Transverse colon (tissue), 4 donors: ENCODE measurements at regions of chr17 and their contacts with region 1.

Region 1: DNA sequence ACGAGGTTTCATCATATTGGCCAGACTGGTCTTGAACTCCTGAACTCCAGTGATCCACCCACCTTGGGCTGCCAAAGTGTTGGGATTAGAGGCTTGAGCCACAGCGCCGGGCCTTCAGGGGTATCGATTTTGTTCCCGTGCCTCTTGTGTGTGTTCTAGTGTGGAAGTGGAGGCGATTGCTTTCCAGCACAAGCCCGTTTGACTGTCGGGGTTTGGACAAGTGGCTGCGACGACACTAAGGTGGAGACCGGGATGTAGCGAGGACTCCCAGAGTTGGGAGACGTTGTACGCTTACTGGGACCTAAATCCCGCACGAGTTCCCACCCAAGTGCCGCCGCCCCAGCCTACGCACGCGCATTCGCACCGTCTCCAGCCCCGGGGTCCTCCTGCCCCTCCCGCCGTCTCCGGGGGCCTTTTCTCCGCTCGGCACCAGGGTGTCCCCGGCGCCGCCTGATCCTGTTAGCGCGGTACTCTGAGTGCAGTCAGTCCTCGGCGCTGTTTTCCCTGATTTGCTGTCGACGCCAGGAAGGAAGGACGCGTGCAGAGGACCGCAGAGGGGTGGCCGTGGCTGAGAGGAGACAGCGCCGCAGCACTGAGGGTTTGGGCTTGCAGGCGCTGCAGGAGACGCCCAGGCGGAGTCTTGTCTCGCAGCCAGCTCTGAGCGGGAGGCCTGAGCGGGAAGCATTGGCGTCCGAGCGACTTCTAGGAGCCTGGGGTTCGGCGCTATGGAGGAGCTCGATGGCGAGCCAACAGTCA is at the start of gene NUP85:
- DNase-seq: peak; percentile 95
- H3K4me3 ChIP-seq: peak within 1 kb of the TSS; percentile 73 to 90 (median 88)
- H3K27ac ChIP-seq: peak within 1 kb of the TSS; percentile 90 to 95 (median 94)
- H3K4me1 ChIP-seq: peaks cover 11 to 34% (median 21%) of the 10 kb centered on the region in 4 donors
- H3K27me3 ChIP-seq: no peaks in the 10 kb centered on the region
- CTCF ChIP-seq: no peak
- EP300 ChIP-seq: no peak
- POLR2A ChIP-seq: peak; percentile 74
- total RNA-seq, gene NUP85: 13.1 to 204 (median 31.8) TPM

Region 2: DNA sequence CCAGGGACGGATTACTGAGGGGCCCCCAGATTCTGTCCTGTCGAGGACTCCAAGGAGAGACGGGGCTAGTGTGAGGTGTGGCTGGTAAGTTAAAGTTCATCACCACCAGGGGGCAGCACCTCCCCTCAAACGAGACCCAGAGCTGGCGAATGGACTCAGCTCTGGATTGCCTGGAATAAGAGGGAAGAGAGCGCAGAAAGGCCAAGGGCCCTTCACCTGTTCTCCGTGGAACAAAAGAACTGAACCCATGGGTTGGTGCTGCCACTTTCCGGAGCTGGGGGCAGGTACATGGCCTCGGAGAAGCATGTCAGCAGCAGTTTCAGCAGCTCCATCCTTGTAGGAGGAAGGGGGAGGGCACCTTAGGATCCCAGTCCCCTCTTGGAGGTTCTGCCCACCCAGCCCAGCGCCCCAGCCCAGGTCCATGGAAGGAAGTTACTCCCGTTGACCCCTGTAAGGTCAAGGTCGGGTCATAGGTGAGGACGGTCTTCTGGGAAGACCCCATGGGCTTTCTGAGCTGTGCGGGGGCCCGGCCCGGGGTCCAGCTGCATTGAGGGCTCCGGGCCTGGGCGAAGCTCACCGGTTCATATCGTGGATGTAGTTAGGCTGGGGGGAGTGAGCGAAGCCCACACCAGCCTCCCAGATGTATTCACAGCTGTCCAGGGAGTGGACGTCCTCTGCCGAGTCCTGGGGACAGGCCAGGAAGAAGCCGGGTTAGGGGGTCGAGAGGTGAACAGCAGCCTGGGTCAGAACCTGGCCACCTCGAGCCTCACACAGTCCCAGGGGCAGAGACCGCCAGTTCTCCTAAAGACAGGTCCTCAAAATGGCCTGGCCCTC is 243.3 kb before region 1 on chr17:
- in situ Hi-C with region 1: no loop called
- intact Hi-C with region 1: no loop called
- DNase-seq: peak; percentile 93
- H3K4me3 ChIP-seq: no peak overlapping the region
- H3K27ac ChIP-seq: no peak overlapping the region
- H3K4me1 ChIP-seq: peaks cover 0 to 5% (median 2%) of the 10 kb centered on the region in 4 donors
- H3K27me3 ChIP-seq: no peaks in the 10 kb centered on the region
- CTCF ChIP-seq: peak; percentile 75 to 87 (median 81)
- EP300 ChIP-seq: no peak
- POLR2A ChIP-seq: no peak

Region 3: GRCh38 chr17:75077496-75078283 is 127.5 kb before region 1 on chr17:
- in situ Hi-C with region 1: no loop called
- intact Hi-C with region 1: loop called (anchors 10 kb)
- DNase-seq: peak; percentile 75
- H3K4me3 ChIP-seq: peak overlapping the region; percentile 2 to 39 (median 32)
- H3K27ac ChIP-seq: peak overlapping the region; percentile 80 to 88 (median 86)
- H3K4me1 ChIP-seq: peaks cover 38 to 51% (median 45%) of the 10 kb centered on the region in 4 donors
- H3K27me3 ChIP-seq: no peaks in the 10 kb centered on the region
- CTCF ChIP-seq: peak in 3 of 5 experiments; percentile 3 to 12 (median 4)
- EP300 ChIP-seq: no peak
- POLR2A ChIP-seq: peak; percentile 40